ENCODE measurements at regions of chr6 and their contacts with region 1.

Region 1: GRCh38 chr6:42460883-42461282 is 9.2 kb upstream of the TRERF1 start:
- DNase-seq: peak; percentile 52
- ATAC-seq: peak; percentile 99
- H3K4me3 ChIP-seq: no peak overlapping the region
- H3K27ac ChIP-seq: no peak overlapping the region
- H3K4me1 ChIP-seq: peaks cover 3% of the 10 kb centered on the region
- H3K27me3 ChIP-seq: no peaks in the 10 kb centered on the region
- CTCF ChIP-seq: no peak
- POLR2A ChIP-seq: no peak
- RAD21 ChIP-seq: no peak

Region 2: DNA sequence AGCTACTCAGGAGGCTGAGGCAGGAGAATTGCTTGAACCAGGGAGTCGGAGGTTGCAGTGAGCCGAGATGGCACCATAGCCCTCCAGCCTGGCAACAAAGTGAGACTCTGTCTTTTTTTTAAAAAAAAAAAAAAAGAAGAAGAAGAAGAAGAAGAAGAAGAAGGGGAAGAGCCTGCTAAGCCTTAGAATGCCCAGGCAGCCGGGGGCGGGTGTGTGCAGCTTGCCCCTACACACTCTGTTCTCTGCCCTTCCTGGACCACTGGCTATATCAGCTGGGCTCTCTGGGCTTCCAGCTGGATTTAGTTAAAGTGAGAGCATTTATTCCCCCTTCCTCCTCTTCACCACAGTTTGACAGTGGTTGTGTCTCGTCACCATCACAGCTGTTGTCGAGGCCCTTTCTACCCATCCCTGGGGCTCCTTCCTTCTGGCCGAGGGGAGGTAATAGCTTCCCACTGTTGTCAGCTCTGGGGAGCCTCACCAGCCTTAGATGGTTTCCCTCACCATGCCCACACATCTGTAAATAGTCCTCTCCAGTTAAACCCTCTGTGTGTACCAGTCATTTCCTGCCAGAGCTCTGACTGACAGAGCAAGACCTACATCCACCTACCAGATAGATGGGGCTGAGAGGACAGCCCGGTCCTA is 86.7 kb before region 1 on chr6:
- CTCF ChIA-PET with region 1: no interaction called
- POLR2A ChIA-PET with region 1: no interaction called
- dilution Hi-C with region 1: no loop called
- in situ Hi-C with region 1: no loop called
- intact Hi-C with region 1: no loop called
- DNase-seq: no peak
- ATAC-seq: peak; percentile 37; the same call in 1 of the 2 replicates
- H3K4me3 ChIP-seq: no peak overlapping the region
- H3K27ac ChIP-seq: no peak overlapping the region
- H3K4me1 ChIP-seq: peaks cover 5% of the 10 kb centered on the region
- H3K27me3 ChIP-seq: no peaks in the 10 kb centered on the region
- CTCF ChIP-seq: no peak
- POLR2A ChIP-seq: no peak
- RAD21 ChIP-seq: no peak

Region 3: GRCh38 chr6:42493914-42494539 is 33.1 kb after region 1 on chr6:
- CTCF ChIA-PET with region 1: no interaction called
- POLR2A ChIA-PET with region 1: interaction called, 11 read pairs
- dilution Hi-C with region 1: no loop called
- in situ Hi-C with region 1: no loop called
- intact Hi-C with region 1: no loop called
- DNase-seq: no peak
- ATAC-seq: no peak
- H3K4me3 ChIP-seq: no peak overlapping the region
- H3K27ac ChIP-seq: no peak overlapping the region
- H3K4me1 ChIP-seq: no peaks in the 10 kb centered on the region
- H3K27me3 ChIP-seq: no peaks in the 10 kb centered on the region; the same call in 1 of the 2 replicates
- CTCF ChIP-seq: no peak
- POLR2A ChIP-seq: no peak
- RAD21 ChIP-seq: no peak

Region 4: GRCh38 chr6:42692137-42692911 is 231.4 kb after region 1 on chr6:
- CTCF ChIA-PET with region 1: no interaction called
- POLR2A ChIA-PET with region 1: no interaction called
- dilution Hi-C with region 1: no loop called
- in situ Hi-C with region 1: no loop called
- intact Hi-C with region 1: no loop called
- DNase-seq: peak; percentile 80
- ATAC-seq: peak; percentile 36; the same call in 1 of the 2 replicates
- H3K4me3 ChIP-seq: no peak overlapping the region
- H3K27ac ChIP-seq: no peak overlapping the region
- H3K4me1 ChIP-seq: peaks cover 18% of the 10 kb centered on the region
- H3K27me3 ChIP-seq: no peaks in the 10 kb centered on the region
- CTCF ChIP-seq: no peak
- POLR2A ChIP-seq: no peak
- RAD21 ChIP-seq: no peak